ENCODE measurements at regions of chr19 and their contacts with region 1.

Region 1: DNA sequence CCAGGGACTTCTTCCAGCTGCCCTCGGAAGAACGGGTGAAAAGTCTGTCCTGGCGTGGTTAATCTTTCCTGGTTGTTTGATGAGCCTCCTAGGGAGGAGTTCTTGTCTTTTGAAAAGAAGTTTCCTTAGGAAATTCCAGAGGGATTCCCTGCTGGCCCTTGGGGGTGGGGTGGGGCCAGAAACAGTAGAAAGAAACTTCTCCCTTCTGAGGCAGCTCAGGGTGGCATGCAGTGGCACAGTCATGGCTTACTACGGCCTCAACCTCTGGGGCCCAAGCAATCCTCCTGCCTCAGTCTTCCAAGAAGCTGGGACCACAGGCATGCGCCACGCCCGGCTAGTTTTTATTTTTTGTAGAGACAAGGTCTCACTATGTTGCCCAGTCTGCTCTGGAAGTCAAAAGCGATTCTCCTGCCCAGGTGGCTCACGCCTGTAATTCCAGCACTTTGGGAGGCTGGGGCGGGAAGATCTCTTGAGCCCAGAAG is 1.5 kb downstream of the ZNF101 start:
- DNase-seq: peak in 2 of 10 donors; percentile 16 to 39

Region 2: GRCh38 chr19:19719798-19720197 is 49.7 kb after region 1 on chr19:
- intact Hi-C with region 1: no loop called
- DNase-seq: no peak

Region 3: DNA sequence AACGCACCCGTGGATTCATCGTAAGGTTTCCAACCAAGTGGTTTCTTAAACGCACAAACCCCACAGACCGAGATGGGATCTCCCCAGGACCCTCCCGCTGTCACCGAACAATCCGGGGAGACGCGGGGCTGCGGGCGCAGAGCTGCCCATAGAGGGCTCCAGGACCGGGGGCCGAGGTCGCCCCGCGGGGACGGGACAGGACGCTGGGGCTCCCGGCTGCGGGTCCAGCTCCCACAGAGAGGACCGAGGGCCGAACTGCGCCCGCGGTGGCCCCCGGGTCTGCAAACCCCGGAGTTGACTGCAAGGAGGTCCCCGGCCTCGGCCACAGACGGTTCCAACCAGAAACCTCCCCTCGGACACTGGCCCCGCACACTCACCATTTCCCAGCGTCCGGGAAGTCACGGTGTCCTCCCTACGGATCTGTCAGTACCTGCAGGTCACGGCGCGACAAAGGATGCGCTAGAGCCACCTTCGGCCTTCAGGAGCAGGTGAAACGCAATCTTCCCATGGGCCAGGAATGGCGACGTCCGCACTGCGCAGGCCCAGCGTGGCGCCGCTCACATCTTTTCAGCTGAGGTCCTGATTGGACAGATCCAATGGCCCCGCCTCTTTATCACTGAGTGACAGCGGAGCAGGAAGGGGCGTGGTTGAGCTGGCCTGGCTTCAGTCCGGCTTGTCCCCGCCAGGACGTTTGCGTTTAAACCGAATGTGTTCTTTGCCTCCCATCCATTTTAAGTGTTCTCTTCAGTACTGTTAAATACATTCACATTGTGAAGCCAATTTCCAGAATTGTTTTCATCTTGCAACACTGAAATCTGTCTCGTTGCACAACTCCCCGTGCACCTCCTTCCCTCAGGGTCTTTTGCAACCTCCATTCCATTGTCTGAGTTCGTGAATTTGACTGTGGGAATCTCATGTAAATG is 62.7 kb after region 1 on chr19 and contains the start of gene ZNF14:
- intact Hi-C with region 1: loop called (anchors 10 kb)
- DNase-seq: peak; percentile 87 to 99 (median 92)

Measured in posterior cingulate gyrus (tissue), 11 donors.